PC-9 (cell line): ENCODE measurements at regions of chr4 and their contacts with region 1.

Region 1: DNA sequence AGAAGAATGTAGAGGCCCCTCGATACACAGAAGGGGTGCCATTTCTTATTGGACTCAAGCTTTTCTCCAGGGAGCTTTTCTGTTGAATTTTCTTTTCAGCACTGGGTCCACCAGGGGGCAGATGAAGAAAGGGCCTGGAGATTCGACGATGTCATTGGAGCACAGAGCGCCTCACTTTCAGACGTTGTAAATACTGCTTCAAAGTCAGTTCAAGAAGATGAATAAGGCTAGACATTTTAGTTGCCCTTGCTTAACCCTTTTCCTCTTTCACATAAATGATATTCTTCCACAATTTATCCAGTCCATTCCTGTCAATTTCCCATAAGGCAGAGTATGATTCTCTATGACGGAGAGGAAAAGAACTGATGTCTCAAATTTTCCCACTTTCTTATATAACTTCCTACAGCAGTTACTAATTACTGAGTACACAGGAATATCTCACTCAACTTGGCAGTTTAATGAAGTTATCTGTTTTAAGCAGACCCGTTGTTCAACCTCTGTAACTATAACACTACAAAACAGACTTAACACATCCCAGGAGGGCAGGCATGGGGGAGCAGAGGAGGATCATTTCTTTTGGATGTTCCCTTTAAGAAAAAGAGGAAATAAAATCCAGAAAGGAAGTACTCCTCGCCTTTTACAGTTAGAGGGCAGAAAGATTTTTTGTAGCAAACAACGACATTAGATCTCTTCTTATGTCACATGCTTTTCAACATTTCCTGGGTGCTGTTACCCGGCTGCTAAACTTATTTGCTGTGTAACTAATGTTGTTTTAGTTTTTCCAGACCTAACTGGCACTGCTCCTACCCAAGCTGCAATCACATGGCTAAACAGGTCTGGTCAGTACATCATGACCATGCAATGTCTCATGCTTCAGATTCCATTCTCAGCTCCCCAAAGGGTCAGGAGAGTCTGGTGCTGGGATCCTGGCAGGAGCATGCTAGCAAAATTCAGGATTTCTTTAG is 12.2 kb upstream of the CENPU start:
- DNase-seq: peak; percentile 64 to 88
- H3K4me3 ChIP-seq: peak overlapping the region; percentile 36; the same call in 1 of the 2 replicates
- H3K27ac ChIP-seq: peak overlapping the region; percentile 98
- H3K4me1 ChIP-seq: peaks cover 42% of the 10 kb centered on the region
- H3K27me3 ChIP-seq: no peaks in the 10 kb centered on the region
- CTCF ChIP-seq: peak; percentile 76

Region 2: GRCh38 chr4:184733654-184734524 is 12.2 kb before region 1 on chr4 and contains the start of gene CENPU:
- CTCF ChIA-PET with region 1: interaction called, 7 read pairs
- POLR2A ChIA-PET with region 1: interaction called, 5 read pairs
- intact Hi-C with region 1: loop called (anchors 1 kb)
- DNase-seq: peak; percentile 90 to 98
- H3K4me3 ChIP-seq: peak within 1 kb of the TSS; percentile 95
- H3K27ac ChIP-seq: peak within 1 kb of the TSS; percentile 73
- H3K4me1 ChIP-seq: peaks cover 19% of the 10 kb centered on the region
- H3K27me3 ChIP-seq: no peaks in the 10 kb centered on the region
- CTCF ChIP-seq: no peak
- total RNA-seq, gene CENPU: 25.5 and 47.7 TPM in 2 replicates

Region 3: DNA sequence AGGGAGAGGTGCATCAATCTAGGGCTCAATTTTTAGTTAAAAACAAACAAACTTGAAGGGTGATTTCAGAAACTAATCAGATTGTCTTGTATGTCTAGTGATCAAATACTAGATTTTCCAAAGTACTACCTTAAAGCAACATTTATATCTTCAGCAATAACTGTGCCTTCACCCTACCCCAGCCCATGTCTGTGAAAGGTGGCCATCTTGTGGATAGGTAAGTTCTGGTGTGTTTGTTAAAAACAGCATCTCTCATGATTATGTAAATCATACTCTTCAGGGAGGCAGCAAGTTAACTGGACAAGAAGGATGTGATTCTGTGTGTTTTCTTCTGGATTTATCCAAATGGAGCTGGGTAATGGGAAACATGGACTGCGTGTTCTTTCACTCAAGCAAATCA is 161.1 kb after region 1 on chr4:
- CTCF ChIA-PET with region 1: no interaction called
- POLR2A ChIA-PET with region 1: no interaction called
- intact Hi-C with region 1: loop called (anchors 1 kb)
- DNase-seq: no peak
- H3K4me3 ChIP-seq: no peak overlapping the region
- H3K27ac ChIP-seq: no peak overlapping the region
- H3K4me1 ChIP-seq: no peaks in the 10 kb centered on the region
- H3K27me3 ChIP-seq: no peaks in the 10 kb centered on the region
- CTCF ChIP-seq: no peak

Region 4: GRCh38 chr4:184983672-184984356 is 237.7 kb after region 1 on chr4:
- CTCF ChIA-PET with region 1: no interaction called
- POLR2A ChIA-PET with region 1: no interaction called
- intact Hi-C with region 1: loop called (anchors 5 kb)
- DNase-seq: peak in 1 of 2 experiments; percentile 57
- H3K4me3 ChIP-seq: no peak overlapping the region
- H3K27ac ChIP-seq: no peak overlapping the region
- H3K4me1 ChIP-seq: no peaks in the 10 kb centered on the region
- H3K27me3 ChIP-seq: no peaks in the 10 kb centered on the region
- CTCF ChIP-seq: no peak; the same call in 1 of the 2 replicates

Region 5: DNA sequence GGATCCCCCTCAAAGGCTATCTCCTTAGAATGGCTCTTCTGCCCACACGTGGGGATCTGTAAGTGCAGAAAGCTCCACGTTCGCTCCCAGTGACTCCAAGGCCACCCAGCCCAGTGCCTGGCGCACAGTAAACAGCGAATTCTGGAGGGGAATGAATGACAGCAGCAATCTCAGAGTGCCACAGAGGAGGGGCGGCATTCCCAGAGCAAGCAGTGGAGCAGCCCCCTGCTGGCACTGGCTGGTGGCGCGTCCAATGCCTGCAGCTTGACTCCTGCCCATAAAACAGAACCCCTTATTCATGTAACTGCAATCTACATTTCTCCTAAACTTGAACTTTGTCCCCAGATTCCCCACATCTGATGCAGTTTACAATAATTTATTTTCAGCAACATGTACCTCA is 265.3 kb after region 1 on chr4:
- CTCF ChIA-PET with region 1: interaction called, 11 read pairs
- POLR2A ChIA-PET with region 1: no interaction called
- intact Hi-C with region 1: no loop called
- DNase-seq: peak in 1 of 2 experiments; percentile 51
- H3K4me3 ChIP-seq: no peak overlapping the region
- H3K27ac ChIP-seq: no peak overlapping the region
- H3K4me1 ChIP-seq: no peaks in the 10 kb centered on the region
- H3K27me3 ChIP-seq: no peaks in the 10 kb centered on the region
- CTCF ChIP-seq: peak; percentile 68

Region 6: DNA sequence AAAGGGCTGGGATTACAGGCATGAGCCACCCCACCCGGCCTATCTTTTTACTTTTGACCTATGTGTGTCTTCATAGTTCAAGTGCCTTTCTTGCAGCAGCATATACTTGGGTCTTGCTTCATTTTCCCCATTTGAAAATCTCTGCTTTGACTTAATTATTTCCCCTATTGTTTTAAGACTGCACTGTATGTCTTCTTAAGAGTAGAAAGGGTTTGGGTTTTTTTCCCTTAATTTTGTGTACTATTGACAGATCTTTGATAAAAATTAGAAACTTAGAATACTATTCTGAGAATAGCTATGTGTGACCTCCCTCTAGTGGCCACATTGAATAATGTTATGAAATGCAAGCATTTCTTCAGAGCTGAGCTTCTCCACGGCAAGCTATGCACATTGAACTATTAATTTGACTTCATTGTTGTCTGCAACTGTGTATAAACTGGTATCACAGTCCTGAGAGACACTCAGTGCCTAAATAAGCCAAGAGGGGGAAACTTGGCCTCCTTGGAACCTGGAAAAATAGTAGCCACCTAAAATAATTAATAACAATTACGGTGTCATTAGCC is 388.3 kb after region 1 on chr4:
- CTCF ChIA-PET with region 1: no interaction called
- POLR2A ChIA-PET with region 1: no interaction called
- intact Hi-C with region 1: loop called (anchors 1 kb)
- DNase-seq: no peak
- H3K4me3 ChIP-seq: no peak overlapping the region
- H3K27ac ChIP-seq: no peak overlapping the region
- H3K4me1 ChIP-seq: no peaks in the 10 kb centered on the region
- H3K27me3 ChIP-seq: no peaks in the 10 kb centered on the region
- CTCF ChIP-seq: peak; percentile 87

Region 7: GRCh38 chr4:185886832-185887524 is 1140.9 kb after region 1 on chr4:
- CTCF ChIA-PET with region 1: no interaction called
- POLR2A ChIA-PET with region 1: no interaction called
- intact Hi-C with region 1: no loop called
- DNase-seq: no peak
- H3K4me3 ChIP-seq: no peak overlapping the region
- H3K27ac ChIP-seq: no peak overlapping the region
- H3K4me1 ChIP-seq: no peaks in the 10 kb centered on the region
- H3K27me3 ChIP-seq: no peaks in the 10 kb centered on the region
- CTCF ChIP-seq: no peak